ENCODE measurements at regions of chr19 and their contacts with region 1.

Region 1: GRCh38 chr19:19554074-19555023 is 16.3 kb downstream of the CILP2 start:
- DNase-seq: no peak
- H3K4me3 ChIP-seq: no peak overlapping the region
- H3K27ac ChIP-seq: no peak overlapping the region
- H3K4me1 ChIP-seq: no peaks in the 10 kb centered on the region
- H3K27me3 ChIP-seq: no peaks in the 10 kb centered on the region
- CTCF ChIP-seq: peak; percentile 61 to 80
- POLR2A ChIP-seq: no peak

Region 2: DNA sequence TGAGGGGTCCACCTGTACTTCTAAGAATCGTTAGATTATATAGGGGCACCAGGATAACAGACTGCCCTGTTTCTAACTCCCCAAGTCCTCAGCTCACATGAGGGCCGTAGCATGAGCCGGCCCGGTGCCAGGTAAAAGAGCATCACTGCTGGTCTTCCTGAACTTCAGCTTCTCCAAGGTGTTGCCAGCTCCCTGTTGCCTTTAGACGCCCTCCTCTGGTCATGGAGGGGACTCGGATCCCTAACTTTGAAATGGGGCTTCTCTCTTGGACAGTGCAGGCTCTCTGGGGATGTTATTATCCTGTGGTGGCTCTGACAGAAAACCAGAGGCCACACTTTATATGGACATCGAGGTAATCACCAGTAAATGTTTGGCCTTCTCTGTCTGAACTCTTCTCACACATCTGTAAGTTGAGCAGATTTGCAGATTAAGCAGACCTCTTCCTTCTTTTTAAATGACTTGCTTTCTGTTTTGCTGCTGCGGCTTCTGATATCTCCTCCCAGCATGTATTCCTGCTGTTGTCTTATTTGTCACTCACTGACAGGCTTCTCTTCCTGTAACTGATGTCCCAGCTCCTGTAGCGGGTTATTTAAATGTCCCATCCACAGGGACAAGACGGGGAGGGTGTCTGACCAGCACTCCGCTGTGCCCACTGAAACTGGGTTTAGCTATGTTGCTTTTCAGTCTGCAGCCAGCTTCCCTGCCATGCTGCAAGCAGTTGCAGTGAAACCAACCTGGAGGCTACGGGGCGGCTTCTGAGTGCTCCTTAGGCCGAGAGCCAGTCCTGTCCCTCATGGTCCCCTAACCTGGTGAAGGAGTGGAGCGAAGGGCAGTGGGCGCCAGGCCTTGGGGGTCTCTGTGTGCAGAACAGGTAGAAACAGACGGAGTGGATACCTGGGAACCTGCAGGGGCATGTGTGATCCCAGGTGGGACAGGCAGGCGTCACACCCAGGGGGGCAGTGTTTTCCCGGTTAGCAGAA is 78.2 kb before region 1 on chr19:
- CTCF ChIA-PET with region 1: no interaction called
- POLR2A ChIA-PET with region 1: no interaction called
- dilution Hi-C with region 1: no loop called
- intact Hi-C with region 1: no loop called
- DNase-seq: no peak
- H3K4me3 ChIP-seq: no peak overlapping the region
- H3K27ac ChIP-seq: no peak overlapping the region
- H3K4me1 ChIP-seq: no peaks in the 10 kb centered on the region
- H3K27me3 ChIP-seq: no peaks in the 10 kb centered on the region
- CTCF ChIP-seq: peak in 1 of 2 donors; percentile 25
- POLR2A ChIP-seq: no peak

Region 3: GRCh38 chr19:19531951-19532805 is 22.2 kb before region 1 on chr19:
- CTCF ChIA-PET with region 1: interaction called, 45 read pairs
- POLR2A ChIA-PET with region 1: no interaction called
- dilution Hi-C with region 1: no loop called
- intact Hi-C with region 1: loop called (anchors 1 kb)
- DNase-seq: peak; percentile 44
- H3K4me3 ChIP-seq: no peak overlapping the region
- H3K27ac ChIP-seq: no peak overlapping the region
- H3K4me1 ChIP-seq: no peaks in the 10 kb centered on the region
- H3K27me3 ChIP-seq: no peaks in the 10 kb centered on the region
- CTCF ChIP-seq: peak; percentile 96 to 99
- POLR2A ChIP-seq: no peak

Region 4: DNA sequence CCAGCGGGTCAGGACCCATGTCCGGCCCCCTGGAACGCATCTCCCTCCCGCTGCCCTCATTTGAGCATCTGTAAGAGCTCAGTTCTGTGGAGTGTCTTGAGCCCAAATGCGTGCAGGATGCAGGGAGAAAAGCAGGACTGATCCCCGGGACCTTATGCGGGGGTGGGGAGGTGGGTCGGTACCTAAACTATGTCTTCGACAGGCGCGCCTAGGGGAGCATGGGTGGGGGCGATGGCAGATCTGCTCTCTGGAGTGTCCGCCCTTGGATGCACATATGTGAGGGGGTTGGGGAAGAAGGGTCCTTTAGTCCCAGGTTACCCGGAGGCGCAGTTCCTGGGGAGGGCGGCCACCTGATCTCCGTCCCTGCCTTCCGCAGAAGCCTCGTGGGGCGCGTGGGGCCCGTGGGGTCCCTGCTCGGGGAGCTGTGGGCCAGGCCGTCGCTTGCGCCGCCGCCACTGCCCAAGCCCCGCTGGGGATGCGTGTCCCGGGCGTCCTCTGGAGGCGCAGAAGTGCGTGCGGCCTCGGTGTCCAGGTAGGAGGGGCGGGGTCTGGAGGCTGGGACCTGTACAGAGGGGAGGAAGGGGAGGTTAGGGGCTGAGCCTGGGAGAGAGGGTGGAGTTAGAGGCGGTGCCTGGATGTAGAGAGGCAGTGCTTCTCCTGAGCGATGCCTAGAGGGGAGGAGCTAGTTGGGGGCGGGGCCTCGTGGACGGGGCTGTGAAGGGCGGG is 13.5 kb before region 1 on chr19:
- CTCF ChIA-PET with region 1: interaction called, 12 read pairs
- POLR2A ChIA-PET with region 1: no interaction called
- dilution Hi-C with region 1: no loop called
- intact Hi-C with region 1: no loop called
- DNase-seq: no peak
- H3K4me3 ChIP-seq: no peak overlapping the region
- H3K27ac ChIP-seq: no peak overlapping the region
- H3K4me1 ChIP-seq: no peaks in the 10 kb centered on the region
- H3K27me3 ChIP-seq: peaks cover 25 to 29% of the 10 kb centered on the region in 2 experiments
- CTCF ChIP-seq: no peak
- POLR2A ChIP-seq: no peak

Region 5: GRCh38 chr19:19568802-19569756 is 14.7 kb after region 1 on chr19:
- CTCF ChIA-PET with region 1: interaction called, 14 read pairs
- POLR2A ChIA-PET with region 1: interaction called, 6 read pairs
- dilution Hi-C with region 1: no loop called
- intact Hi-C with region 1: no loop called
- DNase-seq: no peak
- H3K4me3 ChIP-seq: no peak overlapping the region
- H3K27ac ChIP-seq: no peak overlapping the region
- H3K4me1 ChIP-seq: no peaks in the 10 kb centered on the region
- H3K27me3 ChIP-seq: no peaks in the 10 kb centered on the region
- CTCF ChIP-seq: no peak
- POLR2A ChIP-seq: no peak

Region 6: GRCh38 chr19:19643158-19644053 is 89.1 kb after region 1 on chr19 and contains the start of gene GMIP:
- CTCF ChIA-PET with region 1: no interaction called
- POLR2A ChIA-PET with region 1: no interaction called
- dilution Hi-C with region 1: no loop called
- intact Hi-C with region 1: loop called (anchors 5 kb)
- DNase-seq: peak; percentile 45
- H3K4me3 ChIP-seq: peak within 1 kb of the TSS; percentile 72 to 98 (median 78)
- H3K27ac ChIP-seq: peak within 1 kb of the TSS; percentile 54
- H3K4me1 ChIP-seq: peaks cover 4% of the 10 kb centered on the region
- H3K27me3 ChIP-seq: no peaks in the 10 kb centered on the region
- CTCF ChIP-seq: peak; percentile 81 to 87
- POLR2A ChIP-seq: peak; percentile 55
- total RNA-seq, gene GMIP: 19.8 and 26.0 TPM in 2 replicates

Measured in endothelial cell of umbilical vein (primary cell).